ENCODE measurements at regions of chr10 and their contacts with region 1.

Region 1: GRCh38 chr10:119488675-119489074 is 53.8 kb downstream of the RGS10 start:
- DNase-seq: no peak
- H3K4me3 ChIP-seq: no peak overlapping the region
- CTCF ChIP-seq: no peak

Region 2: GRCh38 chr10:119113751-119114732 is 374.6 kb before region 1 on chr10:
- CTCF ChIA-PET with region 1: no interaction called
- POLR2A ChIA-PET with region 1: no interaction called
- DNase-seq: peak; percentile 84
- H3K4me3 ChIP-seq: no peak overlapping the region
- CTCF ChIP-seq: no peak

Region 3: DNA sequence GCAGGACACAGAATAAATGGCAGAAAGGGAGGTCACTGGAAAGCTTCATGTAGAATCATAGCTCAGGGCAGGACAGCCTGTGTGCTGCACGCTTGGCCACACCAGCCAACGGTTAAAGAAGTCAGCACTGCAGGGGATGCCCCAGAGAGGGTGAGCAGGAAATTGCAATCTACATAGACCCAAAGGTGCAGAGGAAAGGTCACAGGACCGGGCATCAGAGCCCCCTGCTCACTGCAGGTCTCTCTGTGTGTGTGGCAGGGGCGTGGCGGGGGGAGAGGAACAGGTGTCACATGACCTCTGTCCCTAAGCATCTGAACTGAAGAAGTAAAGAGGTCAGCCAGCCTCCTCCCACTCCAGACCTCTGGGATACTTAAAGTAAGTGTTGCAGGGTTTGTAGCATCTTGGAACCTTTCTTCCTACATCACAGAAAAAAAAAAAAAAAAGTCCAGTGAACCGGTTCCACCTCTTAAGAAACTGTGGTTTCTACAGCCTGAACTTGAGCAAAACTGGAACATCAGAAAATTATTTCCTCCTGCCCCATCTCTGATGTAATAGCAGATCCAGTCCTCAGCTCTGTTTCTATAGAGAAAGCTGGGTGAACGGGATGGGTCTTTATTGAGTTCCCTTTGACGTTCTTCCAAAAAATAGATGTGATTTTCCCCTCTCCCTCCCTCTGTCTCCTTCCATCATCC is 10.4 kb before region 1 on chr10:
- CTCF ChIA-PET with region 1: interaction called, 16 read pairs
- POLR2A ChIA-PET with region 1: no interaction called
- DNase-seq: no peak
- H3K4me3 ChIP-seq: no peak overlapping the region
- CTCF ChIP-seq: no peak

Region 4: GRCh38 chr10:119575506-119575905 is 86.8 kb after region 1 on chr10:
- CTCF ChIA-PET with region 1: no interaction called
- POLR2A ChIA-PET with region 1: no interaction called
- DNase-seq: no peak
- H3K4me3 ChIP-seq: no peak overlapping the region
- CTCF ChIP-seq: no peak

Region 5: GRCh38 chr10:119834188-119834587 is 345.5 kb after region 1 on chr10:
- CTCF ChIA-PET with region 1: no interaction called
- POLR2A ChIA-PET with region 1: no interaction called
- DNase-seq: no peak
- H3K4me3 ChIP-seq: no peak overlapping the region
- CTCF ChIP-seq: no peak